AG04450 (cell line): ENCODE measurements at regions of chr19 and their contacts with region 1.

Region 1: GRCh38 chr19:33125929-33126388 is 6.0 kb upstream of the WDR88 start:
- DNase-seq: peak; percentile 42
- H3K4me3 ChIP-seq: no peak overlapping the region
- H3K27ac ChIP-seq: no peak overlapping the region
- H3K27me3 ChIP-seq: no peaks in the 10 kb centered on the region
- CTCF ChIP-seq: peak; percentile 90

Region 2: GRCh38 chr19:33104520-33104919 is 21.4 kb before region 1 on chr19:
- CTCF ChIA-PET with region 1: interaction called, 10 read pairs
- POLR2A ChIA-PET with region 1: no interaction called
- DNase-seq: no peak
- H3K4me3 ChIP-seq: no peak overlapping the region
- H3K27ac ChIP-seq: no peak overlapping the region
- H3K27me3 ChIP-seq: no peaks in the 10 kb centered on the region
- CTCF ChIP-seq: no peak

Region 3: GRCh38 chr19:33143897-33144405 is 18.0 kb after region 1 on chr19:
- CTCF ChIA-PET with region 1: interaction called, 17 read pairs
- POLR2A ChIA-PET with region 1: no interaction called
- DNase-seq: peak; percentile 6
- H3K4me3 ChIP-seq: no peak overlapping the region
- H3K27ac ChIP-seq: no peak overlapping the region
- H3K27me3 ChIP-seq: peaks cover 7% of the 10 kb centered on the region
- CTCF ChIP-seq: peak; percentile 96

Region 4: GRCh38 chr19:33176670-33177416 is 50.9 kb after region 1 on chr19:
- CTCF ChIA-PET with region 1: interaction called, 17 read pairs
- POLR2A ChIA-PET with region 1: no interaction called
- DNase-seq: peak; percentile 98
- H3K4me3 ChIP-seq: peak overlapping the region; percentile 82
- H3K27ac ChIP-seq: peak overlapping the region; percentile 68
- H3K27me3 ChIP-seq: peaks cover 3% of the 10 kb centered on the region
- CTCF ChIP-seq: peak; percentile 25; the same call in 1 of the 2 replicates

Region 5: DNA sequence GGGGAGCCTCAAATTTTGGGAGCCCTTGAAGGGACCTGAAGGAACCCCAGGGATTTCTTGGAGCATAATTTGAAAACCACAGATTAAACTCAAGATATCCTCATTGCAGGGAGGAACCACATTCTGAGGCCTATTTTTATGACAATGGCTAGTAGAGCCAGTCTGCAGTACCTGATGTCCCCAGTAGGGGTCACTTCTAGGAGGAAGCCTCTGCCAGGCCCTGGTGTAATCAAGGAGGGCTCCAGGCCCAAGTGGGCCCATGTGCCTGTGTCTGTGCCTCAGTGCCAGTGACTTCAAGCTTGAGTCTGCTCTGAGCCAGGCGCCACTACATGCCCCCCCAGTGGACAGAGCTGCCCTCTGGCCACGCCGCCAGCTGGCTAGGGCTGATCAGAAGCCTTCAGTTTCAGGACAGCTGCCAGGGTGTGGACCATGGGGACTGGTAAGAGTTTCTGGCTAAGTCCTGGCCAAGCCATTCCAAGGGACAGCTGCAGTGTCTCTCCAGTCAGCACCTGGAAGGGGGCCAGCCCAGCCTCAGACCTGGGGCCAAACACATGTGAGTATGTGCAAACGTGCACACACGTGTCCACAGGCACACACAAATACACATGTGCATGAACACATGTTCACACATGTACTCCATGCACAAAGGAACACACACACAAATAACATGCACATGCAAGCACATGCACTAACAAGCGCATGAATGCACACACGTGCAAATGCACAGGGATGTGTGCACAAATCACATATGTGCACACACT is 120.2 kb after region 1 on chr19:
- CTCF ChIA-PET with region 1: no interaction called
- POLR2A ChIA-PET with region 1: no interaction called
- DNase-seq: no peak
- H3K4me3 ChIP-seq: no peak overlapping the region
- H3K27ac ChIP-seq: no peak overlapping the region
- H3K27me3 ChIP-seq: no peaks in the 10 kb centered on the region
- CTCF ChIP-seq: peak; percentile 52